Calu3 (cell line): ENCODE measurements at regions of chr4 and their contacts with region 1.

Region 1: GRCh38 chr4:55546756-55547465 is at the start of gene CLOCK:
- DNase-seq: peak; percentile 79
- H3K4me3 Mint-ChIP-seq: peak within 1 kb of the TSS; percentile 79
- H3K27ac Mint-ChIP-seq: peak within 1 kb of the TSS; percentile 52
- H3K4me1 Mint-ChIP-seq: peaks cover 38% of the 10 kb centered on the region
- H3K27me3 Mint-ChIP-seq: no peaks in the 10 kb centered on the region
- CTCF ChIP-seq: peak; percentile 20
- total RNA-seq, gene CLOCK: 13.3 and 16.2 TPM in 2 replicates

Region 2: GRCh38 chr4:55345980-55346850 is 200.7 kb before region 1 on chr4 and contains the start of gene SRD5A3:
- CTCF ChIA-PET with region 1: no interaction called
- intact Hi-C with region 1: loop called (anchors 5 kb)
- DNase-seq: peak; percentile 94
- H3K4me3 Mint-ChIP-seq: peak within 1 kb of the TSS; percentile 85
- H3K27ac Mint-ChIP-seq: peak within 1 kb of the TSS; percentile 56
- H3K4me1 Mint-ChIP-seq: peaks cover 15% of the 10 kb centered on the region
- H3K27me3 Mint-ChIP-seq: no peaks in the 10 kb centered on the region
- CTCF ChIP-seq: peak; percentile 91
- total RNA-seq, gene SRD5A3: 35.9 and 39.6 TPM in 2 replicates

Region 3: GRCh38 chr4:55866973-55867574 is 320.2 kb after region 1 on chr4:
- CTCF ChIA-PET with region 1: no interaction called
- intact Hi-C with region 1: loop called (anchors 5 kb)
- DNase-seq: peak; percentile 9
- H3K4me3 Mint-ChIP-seq: no peak overlapping the region
- H3K27ac Mint-ChIP-seq: no peak overlapping the region
- H3K4me1 Mint-ChIP-seq: peaks cover 10% of the 10 kb centered on the region
- H3K27me3 Mint-ChIP-seq: no peaks in the 10 kb centered on the region
- CTCF ChIP-seq: peak; percentile 31